Heart left ventricle (tissue), 16 donors: ENCODE measurements at regions of chr21 and their contacts with region 1.

Region 1: DNA sequence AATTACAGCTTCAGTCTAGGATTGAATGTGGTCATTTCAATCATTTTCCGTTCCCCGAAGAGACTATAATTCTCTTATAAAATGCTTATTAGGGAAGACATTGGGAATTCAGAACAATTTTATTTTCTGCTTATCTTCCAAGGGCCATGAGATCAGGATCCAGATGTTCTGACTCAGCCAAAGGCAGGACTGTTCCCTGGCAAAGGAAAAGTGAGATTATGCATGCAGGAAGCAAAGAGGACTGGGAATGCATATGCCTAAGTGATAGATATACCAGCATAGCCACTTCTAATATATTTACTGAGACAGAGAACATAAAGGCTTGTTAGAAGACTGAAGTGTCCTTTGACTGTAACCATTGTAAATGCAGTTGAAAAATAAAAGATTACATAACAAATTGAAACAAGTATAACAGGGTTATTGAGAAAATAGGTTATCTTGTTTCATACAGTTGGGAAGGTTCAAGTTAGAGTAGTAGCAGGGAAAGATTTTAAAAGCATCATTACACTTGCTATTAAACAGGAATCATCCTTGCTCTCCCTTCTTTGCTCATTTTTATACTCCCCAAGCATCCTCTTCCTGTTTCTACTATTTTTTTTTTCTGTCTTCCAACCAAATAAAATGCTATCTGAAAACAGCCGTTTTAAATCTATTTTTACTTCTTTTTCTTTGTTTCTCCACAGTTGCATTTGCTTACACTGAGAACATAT is 439.6 kb upstream of the ADAMTS5 start:
- DNase-seq: no peak
- ATAC-seq: peak; percentile 48 to 85 (median 66)
- H3K4me3 ChIP-seq: no peak overlapping the region
- H3K27ac ChIP-seq: peak overlapping the region in 10 of 12 donors; percentile 7 to 66 (median 28)
- H3K4me1 ChIP-seq: peaks cover 0 to 35% (median 18%) of the 10 kb centered on the region in 12 donors
- H3K27me3 ChIP-seq: no peaks in the 10 kb centered on the region
- CTCF ChIP-seq: no peak
- POLR2A ChIP-seq: no peak

Region 2: DNA sequence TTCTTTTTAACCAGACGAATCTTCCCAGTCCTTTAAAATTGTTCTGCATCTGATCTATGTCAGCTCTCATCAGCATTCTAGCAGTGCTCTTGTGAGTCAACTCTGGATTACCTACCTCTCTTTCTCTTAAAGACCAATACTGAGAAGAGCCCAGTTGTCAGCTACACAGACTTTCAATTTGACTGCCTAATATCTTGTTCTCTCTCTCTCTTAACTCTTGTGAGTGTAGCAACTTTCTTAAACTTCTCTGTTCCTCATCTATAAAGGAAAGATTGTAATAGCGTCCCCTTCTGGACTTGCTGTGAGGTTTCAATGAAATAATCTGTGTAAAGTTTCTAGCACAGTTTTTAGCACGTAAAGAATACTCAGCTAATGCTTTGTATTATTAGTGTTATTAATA is 59.7 kb after region 1 on chr21:
- intact Hi-C with region 1: loop called in 1 of 10 experiments (anchors 10 kb)
- DNase-seq: no peak
- ATAC-seq: no peak
- H3K4me3 ChIP-seq: no peak overlapping the region
- H3K27ac ChIP-seq: no peak overlapping the region
- H3K4me1 ChIP-seq: no peaks in the 10 kb centered on the region
- H3K27me3 ChIP-seq: no peaks in the 10 kb centered on the region
- CTCF ChIP-seq: peak in 1 of 12 donors; percentile 16
- POLR2A ChIP-seq: no peak